Heart right ventricle (tissue), 16 donors: ENCODE measurements at regions of chr3 and their contacts with region 1.

Region 1: GRCh38 chr3:52291508-52292181 is 4.0 kb downstream of the GLYCTK start:
- DNase-seq: peak in 1 of 2 donors; percentile 33
- ATAC-seq: no peak
- H3K4me3 ChIP-seq: no peak overlapping the region
- H3K27ac ChIP-seq: no peak overlapping the region
- H3K4me1 ChIP-seq: peaks cover 5 to 23% (median 14%) of the 10 kb centered on the region in 9 donors
- H3K27me3 ChIP-seq: no peaks in the 10 kb centered on the region
- CTCF ChIP-seq: peak in 8 of 9 donors; percentile 32 to 65 (median 58)

Region 2: GRCh38 chr3:51982782-51983577 is 308.7 kb before region 1 on chr3 and contains the start of gene ACY1:
- intact Hi-C with region 1: no loop called
- DNase-seq: peak; percentile 87 to 91
- ATAC-seq: peak; percentile 90 to 95 (median 92)
- H3K4me3 ChIP-seq: peak within 1 kb of the TSS; percentile 39 to 80 (median 64)
- H3K27ac ChIP-seq: peak within 1 kb of the TSS; percentile 76 to 98 (median 95)
- H3K4me1 ChIP-seq: peaks cover 9 to 35% (median 28%) of the 10 kb centered on the region in 9 donors
- H3K27me3 ChIP-seq: no peaks in the 10 kb centered on the region
- CTCF ChIP-seq: peak in 1 of 9 donors; percentile 7
- total RNA-seq, gene ACY1: 18.7 to 45.6 (median 24.7) TPM

Region 3: GRCh38 chr3:52231502-52232293 is 59.9 kb before region 1 on chr3:
- intact Hi-C with region 1: loop called in 2 of 10 experiments (anchors 5 kb)
- DNase-seq: peak; percentile 63 to 82
- ATAC-seq: peak in 6 of 8 donors; percentile 5 to 38 (median 20)
- H3K4me3 ChIP-seq: peak overlapping the region in 6 of 10 donors; percentile 5 to 49 (median 28)
- H3K27ac ChIP-seq: peak overlapping the region in 4 of 10 donors; percentile 25 to 93 (median 33)
- H3K4me1 ChIP-seq: peaks cover 12 to 51% (median 40%) of the 10 kb centered on the region in 9 donors
- H3K27me3 ChIP-seq: no peaks in the 10 kb centered on the region
- CTCF ChIP-seq: peak; percentile 80 to 98 (median 84)

Region 4: DNA sequence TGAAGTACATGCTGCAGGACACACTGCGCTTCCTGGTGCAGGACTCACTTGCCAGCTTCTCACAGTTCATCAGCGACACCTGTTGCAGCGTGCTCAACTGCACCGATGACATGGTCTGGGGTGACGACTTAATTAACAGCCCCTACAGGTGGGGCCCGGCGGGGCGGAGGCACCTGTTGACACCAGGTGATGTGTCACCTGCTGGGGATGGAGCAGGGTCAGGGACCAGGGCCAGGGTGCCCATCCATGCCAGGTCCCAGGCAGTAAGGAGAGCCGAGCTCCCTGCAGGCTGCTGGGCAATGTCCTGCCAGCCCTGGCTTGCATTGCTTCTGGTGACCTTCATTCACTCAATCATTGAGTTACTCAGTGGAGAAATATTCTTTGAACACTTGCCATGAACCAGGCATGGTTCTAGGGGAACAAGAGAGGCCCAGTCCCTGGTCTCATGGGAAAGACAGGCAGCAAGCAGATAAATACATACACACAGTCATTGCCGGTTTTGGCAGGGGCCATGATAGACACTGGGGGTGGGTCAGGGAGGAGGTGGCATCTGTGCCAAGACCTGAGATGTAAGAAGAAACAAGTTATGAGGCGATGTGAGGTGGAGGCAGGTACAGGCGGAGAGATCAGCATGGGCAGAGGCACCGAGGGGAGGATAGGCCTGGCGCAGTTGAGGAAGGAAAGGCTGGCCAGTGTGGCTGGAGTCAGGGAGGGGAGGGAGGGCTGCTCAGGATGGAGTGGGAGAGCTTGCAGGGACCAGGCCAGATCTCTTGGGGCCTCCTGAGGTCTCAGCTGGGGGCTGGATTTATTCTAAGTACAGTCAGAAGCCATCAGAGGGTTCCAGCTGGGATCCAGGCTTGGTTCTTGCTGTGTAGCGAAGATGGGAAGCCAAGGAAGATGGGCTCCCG is 55.2 kb after region 1 on chr3:
- intact Hi-C with region 1: loop called in 5 of 10 experiments (anchors 2 to 10 kb)
- DNase-seq: peak; percentile 47 to 53
- ATAC-seq: peak; percentile 53 to 88 (median 80)
- H3K4me3 ChIP-seq: no peak overlapping the region
- H3K27ac ChIP-seq: peak overlapping the region in 6 of 10 donors; percentile 27 to 69 (median 51)
- H3K4me1 ChIP-seq: peaks cover 0 to 25% (median 7%) of the 10 kb centered on the region in 9 donors
- H3K27me3 ChIP-seq: no peaks in the 10 kb centered on the region
- CTCF ChIP-seq: no peak

Region 5: GRCh38 chr3:52388933-52389332 is 97.3 kb after region 1 on chr3:
- intact Hi-C with region 1: no loop called
- DNase-seq: no peak
- ATAC-seq: no peak
- H3K4me3 ChIP-seq: no peak overlapping the region
- H3K27ac ChIP-seq: no peak overlapping the region
- H3K4me1 ChIP-seq: no peaks in the 10 kb centered on the region
- H3K27me3 ChIP-seq: no peaks in the 10 kb centered on the region
- CTCF ChIP-seq: no peak

Region 6: GRCh38 chr3:52529376-52530333 is 238.0 kb after region 1 on chr3:
- intact Hi-C with region 1: no loop called
- DNase-seq: peak in 1 of 2 donors; percentile 84
- ATAC-seq: peak; percentile 10 to 75 (median 62)
- H3K4me3 ChIP-seq: no peak overlapping the region
- H3K27ac ChIP-seq: peak overlapping the region; percentile 70 to 91 (median 83)
- H3K4me1 ChIP-seq: peaks cover 54 to 94% (median 75%) of the 10 kb centered on the region in 9 donors
- H3K27me3 ChIP-seq: no peaks in the 10 kb centered on the region
- CTCF ChIP-seq: no peak